ENCODE measurements at regions of chr21 and their contacts with region 1.

Region 1: GRCh38 chr21:44865561-44866280 is 7.8 kb downstream of the PTTG1IP start:
- DNase-seq: peak; percentile 54
- ATAC-seq: peak; percentile 96
- H3K4me3 Mint-ChIP-seq: peak overlapping the region; percentile 73
- H3K27ac Mint-ChIP-seq: peak overlapping the region; percentile 81
- H3K4me1 Mint-ChIP-seq: peaks cover 58% of the 10 kb centered on the region
- H3K27me3 Mint-ChIP-seq: no peaks in the 10 kb centered on the region
- CTCF ChIP-seq: no peak

Region 2: DNA sequence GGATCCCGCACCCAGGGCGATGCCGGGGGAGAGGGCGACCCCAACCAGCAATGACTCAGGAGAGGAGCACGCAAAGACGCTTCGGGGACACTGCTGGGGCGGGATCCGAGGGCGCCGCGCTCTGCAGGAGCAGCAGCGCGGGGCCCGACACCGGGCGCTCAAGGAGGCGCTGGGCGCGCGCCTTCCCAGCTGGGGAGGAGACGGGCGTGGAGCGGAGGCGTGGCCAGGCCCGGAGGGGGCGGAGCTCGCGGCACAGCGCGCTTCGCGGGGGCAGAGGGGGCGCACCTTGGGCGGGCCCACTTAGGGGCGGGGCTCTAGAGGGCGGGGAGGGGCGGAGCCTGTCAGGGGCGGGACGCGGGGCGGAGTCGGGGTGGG is 48.2 kb before region 1 on chr21:
- CTCF ChIA-PET with region 1: no interaction called
- POLR2A ChIA-PET with region 1: no interaction called
- intact Hi-C with region 1: loop called (anchors 1 kb)
- DNase-seq: peak; percentile 89
- ATAC-seq: peak; percentile 93
- H3K4me3 Mint-ChIP-seq: peak overlapping the region; percentile 53
- H3K27ac Mint-ChIP-seq: no peak overlapping the region
- H3K4me1 Mint-ChIP-seq: peaks cover 12% of the 10 kb centered on the region
- H3K27me3 Mint-ChIP-seq: no peaks in the 10 kb centered on the region
- CTCF ChIP-seq: no peak

Region 3: GRCh38 chr21:44845399-44846223 is 20.1 kb before region 1 on chr21:
- CTCF ChIA-PET with region 1: no interaction called
- POLR2A ChIA-PET with region 1: no interaction called
- intact Hi-C with region 1: loop called (anchors 1 kb)
- DNase-seq: peak; percentile 26
- ATAC-seq: peak; percentile 67
- H3K4me3 Mint-ChIP-seq: peak overlapping the region; percentile 52
- H3K27ac Mint-ChIP-seq: no peak overlapping the region
- H3K4me1 Mint-ChIP-seq: peaks cover 15% of the 10 kb centered on the region
- H3K27me3 Mint-ChIP-seq: peaks cover 24% of the 10 kb centered on the region
- CTCF ChIP-seq: no peak

Region 4: DNA sequence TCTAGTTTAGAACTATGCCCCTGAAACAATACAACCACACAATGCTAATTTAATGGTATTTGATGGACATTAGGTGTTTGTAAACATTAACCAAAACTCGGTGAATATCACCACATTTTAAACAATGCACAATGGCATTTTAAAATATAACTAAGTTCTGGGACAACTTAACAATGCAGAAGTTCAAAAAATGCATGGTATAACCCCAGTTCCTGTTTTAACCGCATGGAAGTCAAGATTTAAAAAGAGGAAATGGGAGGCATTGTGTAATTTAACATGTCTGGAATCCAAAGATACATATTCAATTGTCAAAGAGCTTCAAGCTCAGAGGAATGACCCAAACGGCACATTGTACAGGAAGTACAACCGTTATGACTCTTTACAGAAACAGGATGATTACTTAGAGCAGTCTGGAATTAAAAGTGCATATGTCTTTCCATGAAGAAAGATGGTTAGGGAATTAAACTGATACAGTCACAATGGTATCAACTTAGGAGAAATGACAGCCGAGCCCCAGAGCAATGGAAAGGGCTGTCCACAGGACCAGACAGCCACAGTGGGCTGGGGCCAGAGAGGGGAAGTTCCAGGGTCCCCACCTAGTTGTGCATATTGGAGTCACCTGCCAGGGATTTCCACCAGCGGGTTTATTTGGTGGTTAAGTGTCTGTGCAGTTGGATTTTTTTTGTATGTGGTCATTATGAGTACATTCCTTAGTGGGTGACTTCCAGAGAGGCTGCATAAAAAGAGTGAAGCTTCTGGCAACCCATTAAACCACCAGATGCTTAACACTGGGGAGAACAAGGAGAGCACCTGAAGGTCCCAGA is 15.3 kb after region 1 on chr21:
- CTCF ChIA-PET with region 1: interaction called, 3 read pairs
- POLR2A ChIA-PET with region 1: no interaction called
- intact Hi-C with region 1: loop called (anchors 2 kb)
- DNase-seq: no peak
- ATAC-seq: peak; percentile 32
- H3K4me3 Mint-ChIP-seq: peak overlapping the region; percentile 4
- H3K27ac Mint-ChIP-seq: peak overlapping the region; percentile 19
- H3K4me1 Mint-ChIP-seq: peaks cover 56% of the 10 kb centered on the region
- H3K27me3 Mint-ChIP-seq: no peaks in the 10 kb centered on the region
- CTCF ChIP-seq: no peak